ENCODE measurements at regions of chr20 and their contacts with region 1.

Region 1: DNA sequence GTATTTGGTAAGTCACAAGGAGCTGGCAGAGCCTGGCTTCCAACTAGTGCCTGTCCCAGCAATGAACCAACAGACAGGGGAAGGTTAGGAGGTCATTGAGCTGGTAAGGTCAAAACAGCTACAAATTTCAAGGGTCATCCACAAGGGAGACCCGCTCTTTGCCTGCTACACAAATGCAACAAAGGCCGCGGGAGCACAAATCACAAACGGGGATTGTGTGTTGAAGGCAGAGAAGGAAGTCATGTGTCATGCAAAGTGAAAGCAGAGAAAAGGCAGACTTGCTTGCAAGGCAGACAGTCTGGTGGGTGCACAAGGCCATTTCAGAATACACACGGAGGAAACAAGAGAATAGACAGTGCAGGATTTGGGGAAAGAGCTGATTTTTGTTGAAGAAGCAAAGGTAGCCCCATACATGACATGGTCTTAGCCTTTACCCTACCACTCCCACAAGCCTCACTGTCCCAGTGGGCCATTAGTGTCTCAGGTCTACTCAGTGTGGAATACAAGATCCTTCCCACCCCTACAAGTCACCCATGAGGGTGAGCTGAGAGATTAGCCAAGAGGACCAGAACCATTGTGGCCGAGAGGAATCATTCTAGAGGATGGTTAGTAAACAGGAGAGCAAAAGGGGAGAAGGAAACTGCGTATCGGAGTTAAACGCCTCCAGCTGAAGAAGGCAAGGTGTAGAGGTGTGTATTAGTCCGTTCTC is 18.1 kb upstream of the SAMHD1 start:
- DNase-seq: no peak
- H3K4me3 ChIP-seq: no peak overlapping the region
- H3K27ac ChIP-seq: no peak overlapping the region
- H3K4me1 ChIP-seq: no peaks in the 10 kb centered on the region
- H3K27me3 ChIP-seq: no peaks in the 10 kb centered on the region
- CTCF ChIP-seq: no peak

Region 2: DNA sequence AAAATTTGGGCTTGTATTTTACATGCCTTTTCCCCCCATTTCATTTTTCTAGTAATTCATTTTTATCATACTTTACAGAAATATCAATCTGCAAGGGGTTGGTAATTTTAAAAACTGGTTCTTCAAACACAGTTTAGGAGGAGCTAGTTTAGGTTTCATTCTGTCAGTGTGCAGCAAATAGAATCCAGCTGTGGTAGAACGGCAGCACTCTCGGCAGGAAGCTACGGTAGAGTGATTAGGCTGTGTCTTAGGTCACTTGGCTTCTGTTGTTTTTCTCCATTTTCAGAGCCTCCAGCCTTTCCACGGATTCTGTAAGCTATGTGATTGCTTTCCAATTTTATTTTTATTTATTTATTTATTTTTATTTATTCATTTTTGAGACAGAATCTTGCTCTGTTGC is 61.0 kb before region 1 on chr20:
- CTCF ChIA-PET with region 1: no interaction called
- dilution Hi-C with region 1: no loop called
- in situ Hi-C with region 1: no loop called
- intact Hi-C with region 1: no loop called
- DNase-seq: no peak
- H3K4me3 ChIP-seq: no peak overlapping the region
- H3K27ac ChIP-seq: no peak overlapping the region
- H3K4me1 ChIP-seq: no peaks in the 10 kb centered on the region
- H3K27me3 ChIP-seq: no peaks in the 10 kb centered on the region
- CTCF ChIP-seq: no peak

Region 3: DNA sequence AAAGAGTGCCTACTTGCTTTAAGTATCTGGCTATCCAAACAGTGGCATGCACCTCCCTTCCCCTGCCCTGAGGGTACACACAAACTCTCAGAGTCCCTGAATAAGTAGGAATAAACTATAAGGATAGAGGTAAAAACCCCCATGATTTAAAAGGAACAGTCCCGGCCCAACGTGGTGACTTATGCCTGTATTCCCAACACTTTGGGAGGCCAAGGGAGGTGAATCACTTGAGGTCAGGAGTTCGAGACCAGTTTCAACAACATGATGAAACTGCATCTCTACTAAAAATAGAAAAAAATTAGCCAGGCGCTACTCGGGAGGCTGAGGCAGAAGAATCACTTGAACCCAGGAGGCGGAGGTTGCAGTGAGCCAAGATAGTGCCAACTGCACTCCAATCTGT is 40.3 kb before region 1 on chr20:
- CTCF ChIA-PET with region 1: no interaction called
- dilution Hi-C with region 1: no loop called
- in situ Hi-C with region 1: no loop called
- intact Hi-C with region 1: no loop called
- DNase-seq: peak; percentile 32
- H3K4me3 ChIP-seq: no peak overlapping the region
- H3K27ac ChIP-seq: no peak overlapping the region
- H3K4me1 ChIP-seq: no peaks in the 10 kb centered on the region
- H3K27me3 ChIP-seq: no peaks in the 10 kb centered on the region
- CTCF ChIP-seq: no peak

Region 4: GRCh38 chr20:37142708-37143107 is 173.1 kb after region 1 on chr20:
- CTCF ChIA-PET with region 1: no interaction called
- dilution Hi-C with region 1: loop called (anchors 5 kb)
- in situ Hi-C with region 1: no loop called
- intact Hi-C with region 1: no loop called
- DNase-seq: no peak
- H3K4me3 ChIP-seq: no peak overlapping the region
- H3K27ac ChIP-seq: no peak overlapping the region
- H3K4me1 ChIP-seq: no peaks in the 10 kb centered on the region
- H3K27me3 ChIP-seq: no peaks in the 10 kb centered on the region
- CTCF ChIP-seq: no peak